Activated naive CD4-positive, alpha-beta T cell treated with anti-CD3 and anti-CD28 coated beads, Interleukin-2, amount 10 ng/mL, durations not matched to agents 7 days and 5 days (primary cell): ENCODE measurements at regions of chrX and their contacts with region 1.

Region 1: DNA sequence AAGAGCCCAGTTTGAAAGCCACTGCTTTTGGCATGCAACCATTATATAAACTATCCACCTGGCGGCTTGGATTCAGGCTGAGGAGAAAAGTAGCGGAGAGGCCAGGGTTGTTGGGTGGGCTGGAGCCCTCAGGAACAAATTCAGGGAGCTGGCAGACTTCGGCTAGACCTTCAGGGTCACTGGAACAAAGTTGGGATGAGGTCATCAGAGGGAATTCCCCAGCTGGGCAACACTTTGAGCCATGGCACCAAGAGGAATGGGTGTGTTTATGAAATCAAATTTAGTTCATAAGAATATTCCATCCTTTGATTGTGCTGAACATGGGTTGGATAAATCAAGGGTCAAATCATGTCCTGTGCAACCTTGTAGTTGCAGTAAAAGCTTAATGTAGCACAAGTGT is 22.0 kb downstream of the MTMR1 start:
- DNase-seq: no peak
- H3K4me3 Mint-ChIP-seq: no peak overlapping the region
- H3K27ac Mint-ChIP-seq: no peak overlapping the region
- H3K4me1 Mint-ChIP-seq: peaks cover 16% of the 10 kb centered on the region
- H3K27me3 Mint-ChIP-seq: no peaks in the 10 kb centered on the region

Region 2: GRCh38 chrX:150683536-150684146 is 31.5 kb before region 1 on chrX:
- CTCF ChIA-PET with region 1: interaction called, 94 read pairs
- DNase-seq: no peak
- H3K4me3 Mint-ChIP-seq: no peak overlapping the region
- H3K27ac Mint-ChIP-seq: no peak overlapping the region
- H3K4me1 Mint-ChIP-seq: peaks cover 6% of the 10 kb centered on the region
- H3K27me3 Mint-ChIP-seq: no peaks in the 10 kb centered on the region

Region 3: DNA sequence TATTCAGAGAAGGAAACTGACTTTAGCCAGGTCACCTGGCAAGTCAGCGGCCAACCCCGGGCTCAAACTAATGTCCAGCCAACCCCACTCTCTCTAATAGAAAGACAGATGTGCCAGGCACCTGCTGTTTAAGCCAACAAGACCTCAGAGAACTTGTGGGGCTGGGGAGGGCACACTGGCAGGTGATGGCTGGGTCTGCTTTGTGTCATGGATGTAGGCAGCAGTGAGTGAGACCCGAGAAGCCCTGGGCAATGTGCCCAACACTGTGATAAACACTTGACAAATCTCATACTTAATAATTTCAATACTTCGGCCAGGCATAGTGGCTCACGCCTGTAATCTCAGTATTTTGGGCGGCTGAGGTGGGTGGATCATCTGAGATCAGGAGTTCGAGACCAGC is 192.3 kb after region 1 on chrX:
- CTCF ChIA-PET with region 1: no interaction called
- DNase-seq: no peak
- H3K4me3 Mint-ChIP-seq: no peak overlapping the region
- H3K27ac Mint-ChIP-seq: no peak overlapping the region
- H3K4me1 Mint-ChIP-seq: no peaks in the 10 kb centered on the region
- H3K27me3 Mint-ChIP-seq: peaks cover 11% of the 10 kb centered on the region